ENCODE measurements at regions of chr5 and their contacts with region 1.

Region 1: GRCh38 chr5:127702900-127703561 is at the start of gene CCDC192:
- DNase-seq: no peak
- ATAC-seq: no peak
- total RNA-seq, gene CCDC192: not detected

Region 2: GRCh38 chr5:127660047-127660733 is 42.8 kb before region 1 on chr5:
- intact Hi-C with region 1: loop called (anchors 5 kb)
- DNase-seq: no peak
- ATAC-seq: peak; percentile 73

Region 3: DNA sequence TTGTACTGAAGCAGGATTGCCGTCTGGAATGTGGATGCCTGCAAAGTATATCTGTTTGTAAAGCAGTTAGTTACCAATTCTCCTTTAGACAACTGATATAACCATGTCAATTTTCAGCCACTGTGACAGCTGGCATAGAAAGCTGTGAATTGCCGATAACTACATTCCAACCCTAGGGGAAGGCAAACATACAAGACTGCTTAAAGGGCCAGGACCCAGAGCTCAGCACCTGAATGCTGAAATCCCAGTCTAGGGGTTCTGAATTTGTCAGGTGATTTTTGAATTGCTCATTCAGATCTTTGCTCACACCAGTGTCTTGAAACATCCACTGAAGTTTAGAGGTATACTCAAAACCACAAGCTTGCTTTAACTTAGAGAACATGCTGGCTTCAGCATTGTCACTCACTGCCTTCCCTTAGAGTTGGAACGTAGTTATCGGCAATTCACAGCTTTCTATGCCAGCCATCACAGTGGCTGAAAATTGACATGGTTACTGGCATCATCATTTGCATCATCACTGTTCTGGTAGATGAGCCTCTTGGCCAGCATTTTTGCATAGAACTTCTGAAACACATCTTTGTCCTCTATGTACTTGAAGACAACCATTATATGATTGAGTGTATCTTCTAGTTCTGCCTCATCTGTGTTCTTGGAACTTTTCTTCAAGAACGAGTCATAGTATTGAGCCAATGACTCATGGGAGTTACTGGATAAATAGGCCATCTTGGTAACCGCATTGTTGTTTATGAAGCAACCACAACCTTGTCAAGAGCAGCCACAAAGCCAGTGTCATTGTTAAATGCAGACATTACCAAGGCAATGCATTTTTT is 82.3 kb after region 1 on chr5:
- intact Hi-C with region 1: no loop called
- DNase-seq: no peak
- ATAC-seq: peak; percentile 59

Measured in Right ventricle myocardium inferior (tissue), 1 donor.